ENCODE measurements at regions of chr17 and their contacts with region 1.

Region 1: GRCh38 chr17:21511363-21512198 is 135.4 kb downstream of the KCNJ12 start:
- DNase-seq: peak; percentile 68
- H3K4me3 Mint-ChIP-seq: no peak overlapping the region
- H3K27ac Mint-ChIP-seq: no peak overlapping the region
- H3K4me1 Mint-ChIP-seq: no peaks in the 10 kb centered on the region
- H3K27me3 Mint-ChIP-seq: peaks cover 15% of the 10 kb centered on the region
- CTCF ChIP-seq: peak; percentile 74

Region 2: GRCh38 chr17:20908373-20909273 is 603.0 kb before region 1 on chr17:
- CTCF ChIA-PET with region 1: no interaction called
- POLR2A ChIA-PET with region 1: no interaction called
- intact Hi-C with region 1: no loop called
- DNase-seq: peak; percentile 79
- H3K4me3 Mint-ChIP-seq: peak overlapping the region; percentile 73
- H3K27ac Mint-ChIP-seq: peak overlapping the region; percentile 51
- H3K4me1 Mint-ChIP-seq: peaks cover 10% of the 10 kb centered on the region
- H3K27me3 Mint-ChIP-seq: no peaks in the 10 kb centered on the region
- CTCF ChIP-seq: peak; percentile 60

Region 3: GRCh38 chr17:21126645-21127510 is 384.7 kb before region 1 on chr17 and contains the start of gene DHRS7B:
- CTCF ChIA-PET with region 1: interaction called, 12 read pairs
- POLR2A ChIA-PET with region 1: no interaction called
- intact Hi-C with region 1: loop called (anchors 1 kb)
- DNase-seq: peak; percentile 98
- H3K4me3 Mint-ChIP-seq: peak within 1 kb of the TSS; percentile 97
- H3K27ac Mint-ChIP-seq: peak within 1 kb of the TSS; percentile 92
- H3K4me1 Mint-ChIP-seq: peaks cover 15% of the 10 kb centered on the region
- H3K27me3 Mint-ChIP-seq: no peaks in the 10 kb centered on the region
- CTCF ChIP-seq: no peak
- total RNA-seq, gene DHRS7B: 18.0 and 21.6 TPM in 2 replicates

Region 4: DNA sequence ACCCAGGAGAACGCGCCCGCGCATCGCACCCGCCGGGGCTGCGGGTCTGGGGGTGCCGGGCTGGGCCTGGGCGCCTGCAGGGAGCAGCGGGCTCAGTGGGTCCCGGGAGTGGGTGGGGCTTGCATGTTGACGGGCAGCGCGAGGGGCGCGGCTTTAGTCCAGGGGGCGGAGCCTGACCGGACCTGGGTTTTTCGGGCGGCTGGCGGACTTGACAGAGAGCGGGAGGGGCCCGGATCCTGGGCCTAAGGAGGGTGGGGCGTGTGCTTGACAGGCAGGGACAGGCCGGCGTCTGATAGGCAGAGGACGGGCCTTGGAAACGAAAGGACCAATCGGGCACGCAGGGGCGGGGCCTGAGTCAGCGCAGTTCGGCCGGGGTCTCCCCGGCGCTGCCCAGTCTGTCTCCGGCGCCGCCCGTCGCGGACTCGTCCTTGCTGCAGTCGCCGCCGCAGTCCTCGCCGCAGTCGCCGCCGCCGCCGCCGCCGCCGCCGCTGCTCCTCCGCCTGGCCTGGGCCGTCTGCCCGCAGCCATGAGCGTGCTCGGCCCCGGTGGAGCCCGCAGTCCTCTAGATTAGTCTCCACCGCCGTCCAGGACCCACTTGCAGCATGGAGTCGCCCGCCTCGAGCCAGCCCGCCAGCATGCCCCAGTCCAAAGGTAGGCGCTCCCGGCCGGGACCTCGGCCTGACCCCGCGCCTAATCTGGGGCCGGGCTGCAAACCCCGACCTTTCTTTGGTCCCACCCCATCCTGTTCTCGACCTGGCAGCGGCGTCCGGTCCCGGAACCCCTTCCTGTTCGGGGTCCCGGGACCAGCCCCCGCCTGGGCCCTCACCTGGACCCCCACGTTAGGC is 227.0 kb before region 1 on chr17 and contains the start of gene MAP2K3:
- CTCF ChIA-PET with region 1: interaction called, 52 read pairs
- POLR2A ChIA-PET with region 1: no interaction called
- intact Hi-C with region 1: loop called (anchors 1 kb)
- DNase-seq: peak; percentile 99
- H3K4me3 Mint-ChIP-seq: peak within 1 kb of the TSS; percentile 86
- H3K27ac Mint-ChIP-seq: peak within 1 kb of the TSS; percentile 83
- H3K4me1 Mint-ChIP-seq: peaks cover 46% of the 10 kb centered on the region
- H3K27me3 Mint-ChIP-seq: no peaks in the 10 kb centered on the region
- CTCF ChIP-seq: no peak
- total RNA-seq, gene MAP2K3: 25.7 and 45.2 TPM in 2 replicates

Region 5: DNA sequence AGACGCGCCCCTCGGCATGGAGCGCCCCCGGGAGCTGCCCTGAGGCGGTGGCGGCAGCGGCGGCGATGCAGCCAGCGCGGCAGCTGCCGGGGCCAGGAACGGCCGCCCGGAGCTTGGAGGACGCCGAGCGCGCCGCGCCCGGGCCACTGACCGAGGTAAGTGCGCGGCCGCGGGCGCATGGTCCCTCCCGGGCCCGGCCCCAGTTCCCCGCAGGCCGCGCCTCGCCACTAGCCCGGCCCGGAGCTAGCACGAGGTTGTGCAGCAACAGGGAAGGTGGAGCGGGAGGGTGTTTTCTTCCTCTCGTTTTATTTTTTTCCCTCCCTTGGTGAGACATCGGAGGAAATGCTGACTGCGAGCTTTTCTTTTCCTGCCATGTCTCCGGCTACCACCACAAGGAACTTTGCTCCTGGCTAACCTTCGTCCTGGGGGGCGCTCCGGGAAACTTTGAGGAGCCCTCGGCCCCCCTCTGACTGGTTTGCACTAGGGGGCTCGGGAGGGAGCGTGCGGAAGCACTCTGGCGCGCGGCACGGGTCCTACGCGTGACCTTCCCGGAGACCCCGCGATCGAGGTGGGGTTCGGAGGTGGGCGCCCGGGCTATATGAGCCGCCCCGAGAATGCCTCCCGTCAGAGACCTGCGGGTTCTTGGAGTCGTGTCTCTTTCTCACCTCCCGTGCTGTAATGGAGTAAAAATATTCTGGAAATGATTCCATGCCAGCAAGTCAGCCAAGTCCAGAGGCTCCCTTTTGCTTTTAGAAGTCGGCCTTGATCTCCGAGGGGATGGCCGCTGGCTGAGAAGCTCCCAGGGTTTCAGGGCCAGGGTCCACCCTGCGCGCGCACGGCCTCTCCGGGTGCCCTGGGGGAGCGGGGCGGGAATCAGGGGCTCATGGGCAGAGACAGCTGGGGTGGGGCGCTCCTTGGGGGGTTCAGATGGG is 134.6 kb before region 1 on chr17:
- CTCF ChIA-PET with region 1: no interaction called
- POLR2A ChIA-PET with region 1: no interaction called
- intact Hi-C with region 1: no loop called
- DNase-seq: no peak
- H3K4me3 Mint-ChIP-seq: no peak overlapping the region
- H3K27ac Mint-ChIP-seq: no peak overlapping the region
- H3K4me1 Mint-ChIP-seq: no peaks in the 10 kb centered on the region
- H3K27me3 Mint-ChIP-seq: no peaks in the 10 kb centered on the region
- CTCF ChIP-seq: no peak

Region 6: DNA sequence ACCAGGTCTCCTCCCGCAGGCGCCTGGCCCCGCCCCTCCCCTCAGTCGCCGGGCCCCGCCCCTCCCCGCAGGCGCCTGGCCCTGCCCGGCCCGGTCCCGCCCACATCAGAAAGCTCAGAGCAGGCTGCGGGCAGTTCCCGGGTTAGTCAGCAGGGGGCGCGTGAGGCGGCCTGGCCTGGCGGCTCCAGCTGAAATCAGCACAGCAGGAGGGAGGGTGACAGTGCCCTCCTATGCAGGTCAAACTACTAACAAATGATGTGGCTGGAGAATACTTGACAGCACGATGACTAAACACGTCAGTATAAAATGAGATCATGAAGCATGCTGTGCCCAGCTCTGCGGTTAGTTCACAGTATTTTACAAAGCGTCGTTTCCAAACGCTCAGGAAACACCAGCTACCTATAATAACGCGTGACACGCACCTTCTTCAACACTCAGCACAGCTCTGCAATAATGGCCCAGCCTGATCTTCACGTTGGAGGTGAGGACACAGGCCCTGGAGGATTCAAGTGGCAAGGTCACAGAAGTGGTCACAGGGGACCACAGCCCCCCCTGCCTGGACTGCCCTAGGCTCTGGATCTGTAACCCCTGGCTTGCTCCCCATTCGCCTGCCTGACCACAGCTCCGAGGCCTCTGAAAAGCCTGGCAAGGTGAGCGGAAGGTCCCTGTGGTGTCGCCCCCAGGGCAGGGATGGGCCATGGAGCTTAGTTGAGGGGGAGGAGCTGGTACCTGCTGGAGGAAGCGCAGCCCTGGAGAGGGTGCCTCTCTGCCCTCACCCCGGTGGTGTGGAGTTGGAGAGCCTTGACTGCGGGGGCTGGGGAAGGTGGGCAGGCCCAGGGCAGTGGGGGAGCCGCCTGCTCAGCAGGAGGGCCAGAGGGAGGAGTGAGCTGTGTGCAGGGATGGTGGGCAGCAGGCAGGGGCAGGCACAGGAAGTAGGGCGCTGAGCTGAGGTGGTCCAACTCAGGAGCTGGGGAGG is 54.2 kb before region 1 on chr17:
- CTCF ChIA-PET with region 1: interaction called, 100 read pairs
- POLR2A ChIA-PET with region 1: no interaction called
- intact Hi-C with region 1: loop called (anchors 1 kb)
- DNase-seq: peak; percentile 85
- H3K4me3 Mint-ChIP-seq: no peak overlapping the region
- H3K27ac Mint-ChIP-seq: no peak overlapping the region
- H3K4me1 Mint-ChIP-seq: peaks cover 5% of the 10 kb centered on the region
- H3K27me3 Mint-ChIP-seq: peaks cover 31% of the 10 kb centered on the region
- CTCF ChIP-seq: peak; percentile 95

Region 7: GRCh38 chr17:21532763-21533385 is 21.3 kb after region 1 on chr17:
- CTCF ChIA-PET with region 1: interaction called, 40 read pairs
- POLR2A ChIA-PET with region 1: no interaction called
- intact Hi-C with region 1: no loop called
- DNase-seq: no peak
- H3K4me3 Mint-ChIP-seq: no peak overlapping the region
- H3K27ac Mint-ChIP-seq: no peak overlapping the region
- H3K4me1 Mint-ChIP-seq: no peaks in the 10 kb centered on the region
- H3K27me3 Mint-ChIP-seq: no peaks in the 10 kb centered on the region
- CTCF ChIP-seq: no peak

Measured in MCF 10A (cell line).